ENCODE measurements at regions of chr14 and their contacts with region 1.

Region 1: DNA sequence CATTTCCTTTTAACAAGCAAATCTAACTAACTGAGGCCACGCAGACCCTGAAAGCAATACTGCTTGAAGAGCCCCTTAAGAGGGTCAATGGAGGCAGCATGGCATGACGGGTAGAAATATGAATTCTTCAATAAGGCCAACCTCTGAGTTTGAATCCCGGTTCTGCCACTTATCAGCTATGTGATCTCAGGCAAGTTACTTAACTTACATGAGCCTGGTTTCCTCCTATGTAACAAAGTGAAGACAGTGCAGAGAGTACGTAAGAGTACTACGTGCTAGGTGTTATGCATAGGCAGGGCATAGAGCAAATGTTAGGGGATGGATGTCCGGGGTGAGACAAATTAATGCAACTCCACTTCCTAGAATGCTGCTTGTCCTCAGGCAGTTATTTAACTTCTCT is 4.7 kb downstream of the HOMEZ start:
- DNase-seq: no peak
- ATAC-seq: no peak
- H3K4me3 ChIP-seq: no peak overlapping the region
- H3K27ac ChIP-seq: no peak overlapping the region
- H3K4me1 ChIP-seq: peaks cover 25% of the 10 kb centered on the region
- H3K27me3 ChIP-seq: no peaks in the 10 kb centered on the region; a peak in 1 of 5 replicates
- CTCF ChIP-seq: no peak
- EP300 ChIP-seq: no peak
- POLR2A ChIP-seq: no peak
- RAD21 ChIP-seq: no peak

Region 2: GRCh38 chr14:22668417-22668816 is 612.8 kb before region 1 on chr14:
- CTCF ChIA-PET with region 1: no interaction called
- POLR2A ChIA-PET with region 1: no interaction called
- in situ Hi-C with region 1: no loop called
- intact Hi-C with region 1: no loop called
- DNase-seq: no peak
- ATAC-seq: no peak
- H3K4me3 ChIP-seq: no peak overlapping the region
- H3K27ac ChIP-seq: no peak overlapping the region
- H3K4me1 ChIP-seq: peaks cover 10% of the 10 kb centered on the region
- H3K27me3 ChIP-seq: no peaks in the 10 kb centered on the region; a peak in 2 of 5 replicates
- CTCF ChIP-seq: no peak
- EP300 ChIP-seq: no peak
- POLR2A ChIP-seq: no peak
- RAD21 ChIP-seq: no peak

Region 3: DNA sequence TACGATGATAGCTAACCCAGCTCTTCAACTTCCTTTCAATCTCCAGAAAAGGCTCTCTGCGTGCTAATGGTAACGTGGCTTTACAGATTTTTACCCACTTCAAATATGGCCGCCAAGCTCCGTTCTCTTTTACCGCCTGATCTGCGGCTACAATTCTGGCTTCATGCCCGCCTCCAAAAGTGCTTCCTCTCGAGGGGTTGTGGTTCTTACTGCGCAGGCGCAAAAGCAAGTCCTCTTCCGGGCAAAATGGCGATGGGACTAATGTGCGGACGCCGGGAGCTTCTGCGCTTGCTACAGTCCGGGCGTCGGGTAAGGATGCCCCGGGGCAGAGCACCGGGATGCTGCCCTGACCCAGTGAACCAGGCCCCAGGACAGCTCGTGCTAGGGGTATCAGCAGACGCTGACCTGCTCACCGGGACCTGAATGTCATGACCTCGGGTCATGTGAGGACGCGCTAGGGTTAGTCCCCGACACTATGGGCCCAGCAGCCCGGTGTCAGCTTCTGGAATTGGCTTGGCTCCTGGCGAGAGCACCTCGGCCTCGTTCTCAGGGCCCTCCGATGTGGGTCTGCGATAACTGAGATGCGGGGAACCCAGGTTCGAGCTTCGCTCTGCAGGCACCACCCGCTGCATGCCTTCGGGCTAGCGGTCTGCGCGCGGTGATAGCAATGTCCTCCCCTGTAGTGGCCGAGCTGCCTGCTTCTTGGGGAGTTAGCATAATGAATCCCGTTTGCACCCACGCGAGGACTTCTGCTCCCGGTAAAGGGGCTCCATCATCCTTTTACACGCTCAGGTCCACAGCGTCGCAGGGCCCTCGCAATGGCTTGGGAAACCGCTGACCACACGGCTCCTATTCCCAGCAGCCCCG is 514.6 kb before region 1 on chr14 and contains the start of gene OXA1L:
- CTCF ChIA-PET with region 1: no interaction called
- POLR2A ChIA-PET with region 1: no interaction called
- in situ Hi-C with region 1: no loop called
- intact Hi-C with region 1: no loop called
- DNase-seq: peak; percentile 100
- ATAC-seq: peak; percentile 90
- H3K4me3 ChIP-seq: peak within 1 kb of the TSS; percentile 72 to 96 (median 83)
- H3K27ac ChIP-seq: peak within 1 kb of the TSS; percentile 74
- H3K4me1 ChIP-seq: peaks cover 22% of the 10 kb centered on the region
- H3K27me3 ChIP-seq: no peaks in the 10 kb centered on the region; a peak in 1 of 5 replicates
- CTCF ChIP-seq: peak; percentile 37
- EP300 ChIP-seq: peak in 1 of 2 experiments; percentile 52; a peak in 1 of 4 replicates
- POLR2A ChIP-seq: peak; percentile 98
- RAD21 ChIP-seq: peak; percentile 13
- total RNA-seq, gene OXA1L: 216 and 230 TPM in 2 replicates

Region 4: GRCh38 chr14:23301288-23301968 is 20.2 kb after region 1 on chr14:
- CTCF ChIA-PET with region 1: no interaction called
- POLR2A ChIA-PET with region 1: interaction called, 153 read pairs
- in situ Hi-C with region 1: no loop called
- intact Hi-C with region 1: loop called (anchors 1 kb)
- DNase-seq: peak; percentile 100
- ATAC-seq: peak; percentile 87
- H3K4me3 ChIP-seq: peak overlapping the region; percentile 67 to 88 (median 75)
- H3K27ac ChIP-seq: peak overlapping the region; percentile 91
- H3K4me1 ChIP-seq: peaks cover 57% of the 10 kb centered on the region
- H3K27me3 ChIP-seq: no peaks in the 10 kb centered on the region; a peak in 1 of 5 replicates
- CTCF ChIP-seq: peak; percentile 92
- EP300 ChIP-seq: peak in 1 of 2 experiments; percentile 54; a peak in 2 of 4 replicates
- POLR2A ChIP-seq: no peak
- RAD21 ChIP-seq: peak; percentile 87

Region 5: GRCh38 chr14:23402296-23403138 is 121.3 kb after region 1 on chr14:
- CTCF ChIA-PET with region 1: no interaction called
- POLR2A ChIA-PET with region 1: no interaction called
- in situ Hi-C with region 1: no loop called
- intact Hi-C with region 1: no loop called
- DNase-seq: no peak
- ATAC-seq: peak; percentile 5; the same call in 2 of the 3 replicates
- H3K4me3 ChIP-seq: no peak overlapping the region; a peak in 1 of 6 replicates
- H3K27ac ChIP-seq: no peak overlapping the region
- H3K4me1 ChIP-seq: no peaks in the 10 kb centered on the region
- H3K27me3 ChIP-seq: peaks cover 37 to 91% of the 10 kb centered on the region in 2 experiments; a peak in 4 of 5 replicates
- CTCF ChIP-seq: no peak
- EP300 ChIP-seq: no peak
- POLR2A ChIP-seq: no peak
- RAD21 ChIP-seq: no peak

Measured in HepG2 (cell line).